ENCODE measurements at regions of chr16 and their contacts with region 1.

Region 1: GRCh38 chr16:6081320-6081976 is 983.9 kb upstream of the EEF2KMT start:
- DNase-seq: no peak
- ATAC-seq: no peak

Region 2: DNA sequence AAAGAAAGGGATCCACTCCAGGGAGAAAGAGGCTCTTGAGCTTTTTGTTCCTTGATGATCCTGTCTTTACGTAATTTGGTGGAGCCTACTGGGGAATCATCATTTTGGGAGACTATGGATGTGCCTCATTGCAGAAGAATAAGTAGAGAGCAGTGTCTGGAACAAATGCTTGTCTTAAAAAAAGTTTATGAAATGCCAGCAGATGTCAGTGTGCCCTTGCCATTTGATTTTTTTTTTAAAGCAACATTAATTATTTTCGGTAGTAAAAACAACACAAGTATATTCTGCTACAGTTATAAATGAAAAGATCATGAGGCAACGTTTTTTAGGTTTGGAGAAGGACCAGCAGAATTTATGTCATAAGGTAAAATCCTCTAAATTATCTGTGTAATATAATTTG is 49.0 kb before region 1 on chr16:
- intact Hi-C with region 1: loop called (anchors 5 kb)
- DNase-seq: no peak
- ATAC-seq: no peak

Measured in Right ventricle myocardium superior (tissue), 1 donor.